Endothelial cell of umbilical vein (primary cell): ENCODE measurements at regions of chr10 and their contacts with region 1.

Region 1: GRCh38 chr10:73263948-73264347 is 11.5 kb upstream of the MRPS16 start:
- DNase-seq: peak; percentile 53
- H3K4me3 ChIP-seq: no peak overlapping the region
- H3K27ac ChIP-seq: no peak overlapping the region
- H3K4me1 ChIP-seq: peaks cover 7% of the 10 kb centered on the region
- H3K27me3 ChIP-seq: peaks cover 4 to 14% of the 10 kb centered on the region in 2 experiments
- CTCF ChIP-seq: peak; percentile 39 to 51
- POLR2A ChIP-seq: no peak

Region 2: DNA sequence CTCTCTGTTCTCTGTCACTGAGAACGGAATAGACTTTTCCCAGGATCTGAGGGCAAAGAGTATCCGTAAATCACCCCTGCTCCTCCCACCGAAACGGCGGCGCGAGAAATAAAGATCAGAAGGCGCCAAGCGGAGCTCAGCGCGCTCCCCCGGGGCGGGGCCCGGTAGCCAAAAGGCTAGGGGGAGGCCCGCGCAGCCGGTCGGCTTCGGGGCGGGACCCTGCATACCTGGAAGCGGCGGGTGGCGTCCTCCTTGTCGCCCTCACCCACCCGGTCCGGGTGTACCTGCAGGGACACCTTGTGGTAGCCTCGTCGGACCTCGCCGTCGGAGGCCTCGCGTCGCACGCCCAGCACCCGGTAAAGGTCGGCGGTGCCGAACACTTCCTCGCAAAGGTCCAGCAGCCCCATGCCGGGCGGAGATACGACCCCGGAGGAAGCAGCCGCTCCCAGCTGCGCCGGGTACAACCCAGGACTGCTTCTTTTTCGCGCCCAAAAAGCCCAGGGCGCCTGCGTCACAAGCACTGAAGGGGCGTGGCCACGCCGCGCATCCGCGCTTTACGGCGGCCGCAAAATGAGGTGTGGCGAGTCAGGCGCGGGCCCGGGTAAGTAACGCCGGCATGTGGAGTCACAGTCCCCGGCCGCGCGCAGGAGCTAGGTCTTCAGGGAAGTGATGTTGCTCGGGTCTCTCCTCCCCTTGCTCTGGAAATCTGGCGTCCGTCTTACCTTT is 17.0 kb before region 1 on chr10 and contains the start of gene DNAJC9:
- CTCF ChIA-PET with region 1: interaction called, 16 read pairs
- POLR2A ChIA-PET with region 1: interaction called, 3 read pairs
- dilution Hi-C with region 1: no loop called
- intact Hi-C with region 1: no loop called
- DNase-seq: peak; percentile 96
- H3K4me3 ChIP-seq: peak within 1 kb of the TSS; percentile 63 to 91 (median 89)
- H3K27ac ChIP-seq: peak within 1 kb of the TSS; percentile 68
- H3K4me1 ChIP-seq: peaks cover 36% of the 10 kb centered on the region
- H3K27me3 ChIP-seq: no peaks in the 10 kb centered on the region
- CTCF ChIP-seq: no peak
- POLR2A ChIP-seq: peak; percentile 95
- total RNA-seq, gene DNAJC9: 47.1 and 55.0 TPM in 2 replicates

Region 3: GRCh38 chr10:73252445-73253224 is 11.3 kb before region 1 on chr10 and contains the start of gene MRPS16:
- CTCF ChIA-PET with region 1: interaction called, 16 read pairs
- POLR2A ChIA-PET with region 1: no interaction called
- dilution Hi-C with region 1: no loop called
- intact Hi-C with region 1: no loop called
- DNase-seq: peak; percentile 97
- H3K4me3 ChIP-seq: peak within 1 kb of the TSS; percentile 60 to 91 (median 83)
- H3K27ac ChIP-seq: peak within 1 kb of the TSS; percentile 81
- H3K4me1 ChIP-seq: peaks cover 23% of the 10 kb centered on the region
- H3K27me3 ChIP-seq: no peaks in the 10 kb centered on the region
- CTCF ChIP-seq: no peak
- POLR2A ChIP-seq: peak; percentile 88
- total RNA-seq, gene MRPS16: 86.0 and 94.5 TPM in 2 replicates

Region 4: GRCh38 chr10:73281097-73281496 is 17.1 kb after region 1 on chr10:
- CTCF ChIA-PET with region 1: interaction called, 16 read pairs
- POLR2A ChIA-PET with region 1: no interaction called
- dilution Hi-C with region 1: no loop called
- intact Hi-C with region 1: no loop called
- DNase-seq: no peak
- H3K4me3 ChIP-seq: no peak overlapping the region
- H3K27ac ChIP-seq: no peak overlapping the region
- H3K4me1 ChIP-seq: no peaks in the 10 kb centered on the region
- H3K27me3 ChIP-seq: peaks cover 0 to 2% of the 10 kb centered on the region in 2 experiments
- CTCF ChIP-seq: no peak
- POLR2A ChIP-seq: no peak

Region 5: DNA sequence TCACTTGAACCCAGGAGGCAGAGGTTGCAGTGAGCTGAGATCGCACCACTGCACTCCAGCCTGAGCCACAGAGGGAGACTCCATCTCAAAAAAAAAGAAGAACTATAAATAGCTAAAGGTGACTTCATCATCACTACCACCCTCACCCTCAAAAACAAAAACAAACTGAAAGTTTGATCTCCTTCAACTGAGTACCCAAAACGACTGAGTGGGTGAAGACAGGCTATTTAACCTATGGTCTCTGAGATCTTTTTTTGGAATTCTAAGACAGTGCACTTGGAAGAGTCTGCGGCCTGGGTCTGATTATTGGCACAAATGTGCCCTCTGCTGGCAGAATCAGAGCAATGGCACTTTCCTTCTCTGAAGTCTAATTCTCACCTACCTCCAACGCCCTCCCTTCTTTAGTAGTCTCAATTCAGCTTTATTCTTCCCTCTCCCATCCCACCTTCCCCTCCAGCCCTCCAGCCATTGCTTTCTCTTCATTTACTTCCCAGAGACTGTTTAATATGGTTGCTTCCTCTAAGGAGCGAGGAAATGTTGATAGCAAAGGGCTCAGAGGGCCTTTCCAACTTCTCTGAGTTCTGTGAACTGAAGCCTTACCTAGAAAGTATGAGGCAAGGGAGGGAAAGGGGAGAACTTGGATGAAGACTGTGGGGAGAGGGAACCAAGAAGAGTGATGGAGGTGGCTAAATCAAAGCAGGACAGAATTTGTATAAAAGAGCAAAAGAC is 380.2 kb after region 1 on chr10:
- CTCF ChIA-PET with region 1: interaction called, 12 read pairs
- POLR2A ChIA-PET with region 1: no interaction called
- dilution Hi-C with region 1: no loop called
- intact Hi-C with region 1: loop called (anchors 1 kb)
- DNase-seq: peak; percentile 70
- H3K4me3 ChIP-seq: no peak overlapping the region
- H3K27ac ChIP-seq: no peak overlapping the region
- H3K4me1 ChIP-seq: peaks cover 2% of the 10 kb centered on the region
- H3K27me3 ChIP-seq: peaks cover 7 to 17% of the 10 kb centered on the region in 2 experiments
- CTCF ChIP-seq: peak; percentile 72 to 77
- POLR2A ChIP-seq: no peak